ENCODE measurements at regions of chr2 and their contacts with region 1.

Region 1: GRCh38 chr2:124027182-124027581 is 2.1 kb downstream of the CNTNAP5 start:
- DNase-seq: peak; percentile 9
- ATAC-seq: peak; percentile 91
- H3K4me3 ChIP-seq: no peak overlapping the region
- H3K27ac ChIP-seq: no peak overlapping the region
- H3K4me1 ChIP-seq: no peaks in the 10 kb centered on the region
- H3K27me3 ChIP-seq: peaks cover 0 to 4% of the 10 kb centered on the region in 2 experiments; a peak in 1 of 4 replicates
- CTCF ChIP-seq: peak; percentile 54 to 72 (median 57); a peak in 4 of 6 replicates
- EP300 ChIP-seq: no peak
- POLR2A ChIP-seq: no peak
- RAD21 ChIP-seq: peak; percentile 86

Region 2: GRCh38 chr2:124001696-124002430 is 25.3 kb before region 1 on chr2:
- CTCF ChIA-PET with region 1: interaction called, 10 read pairs
- POLR2A ChIA-PET with region 1: no interaction called
- RAD21 ChIA-PET with region 1: no interaction called
- SMC1A ChIA-PET with region 1: interaction called, 3 read pairs
- in situ Hi-C with region 1: no loop called
- intact Hi-C with region 1: no loop called
- DNase-seq: no peak
- ATAC-seq: no peak
- H3K4me3 ChIP-seq: no peak overlapping the region
- H3K27ac ChIP-seq: no peak overlapping the region
- H3K4me1 ChIP-seq: no peaks in the 10 kb centered on the region
- H3K27me3 ChIP-seq: no peaks in the 10 kb centered on the region
- CTCF ChIP-seq: no peak
- EP300 ChIP-seq: no peak
- POLR2A ChIP-seq: no peak
- RAD21 ChIP-seq: no peak

Measured in GM12878 (cell line).